ENCODE measurements at regions of chr2 and their contacts with region 1.

Region 1: GRCh38 chr2:230658877-230659652 is 53.6 kb upstream of the CAB39 start:
- DNase-seq: peak; percentile 91
- ATAC-seq: peak; percentile 61
- H3K4me3 ChIP-seq: peak overlapping the region; percentile 62
- H3K27ac ChIP-seq: peak overlapping the region; percentile 91
- H3K4me1 ChIP-seq: peaks cover 67% of the 10 kb centered on the region
- H3K27me3 ChIP-seq: no peaks in the 10 kb centered on the region
- CTCF ChIP-seq: no peak
- EP300 ChIP-seq: peak; percentile 62 to 76
- POLR2A ChIP-seq: no peak; the same call in 1 of the 2 replicates
- RAD21 ChIP-seq: peak; percentile 31; the same call in 1 of the 2 replicates

Region 2: DNA sequence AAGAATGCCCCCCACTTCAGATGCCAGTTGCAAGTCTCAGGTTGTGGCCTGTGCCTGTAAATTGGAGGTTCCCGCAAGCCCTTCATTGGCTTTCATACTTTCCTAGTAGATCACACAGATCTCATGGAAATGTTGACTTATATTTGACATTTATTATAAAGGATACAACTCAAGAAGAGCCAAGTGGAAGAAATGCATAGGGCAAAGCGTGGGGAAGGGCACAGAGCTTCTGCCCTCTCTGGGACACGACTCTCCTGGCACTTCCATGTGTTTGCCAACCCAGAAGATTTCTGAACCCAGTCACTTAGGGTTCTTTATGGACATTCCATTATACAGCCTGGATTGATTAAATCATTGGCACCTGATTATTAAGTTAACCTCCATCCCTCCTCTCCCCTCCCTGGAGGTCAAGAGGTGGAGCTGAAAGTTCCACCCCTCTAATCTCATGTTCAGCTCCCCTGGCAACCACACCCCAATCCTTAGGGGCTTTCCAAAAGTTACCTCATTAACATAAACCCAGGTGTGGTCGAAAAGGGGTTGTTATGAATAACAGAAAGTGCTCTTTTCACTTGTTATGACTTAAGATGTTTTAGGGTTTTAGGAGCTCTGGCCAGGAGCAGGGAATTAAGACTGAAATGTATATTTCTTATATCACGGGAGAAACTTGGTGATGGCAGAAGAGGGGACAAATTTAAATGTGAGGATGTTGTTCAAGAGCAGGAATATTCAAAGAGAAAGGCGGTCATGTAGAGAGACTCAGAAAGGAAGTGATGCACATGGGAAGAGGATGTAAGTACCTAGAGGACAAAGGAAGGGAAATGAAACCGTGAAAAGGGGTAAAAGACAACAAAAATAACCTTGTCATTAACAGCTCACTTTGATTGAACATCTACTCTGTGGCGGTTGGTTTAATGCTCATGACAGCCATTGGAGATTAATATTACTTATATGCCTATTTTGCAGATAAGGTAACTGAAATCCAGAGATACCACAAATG is 211.3 kb before region 1 on chr2:
- CTCF ChIA-PET with region 1: no interaction called
- POLR2A ChIA-PET with region 1: no interaction called
- RAD21 ChIA-PET with region 1: interaction called, 3 read pairs
- SMC1A ChIA-PET with region 1: interaction called, 3 read pairs
- in situ Hi-C with region 1: no loop called
- intact Hi-C with region 1: loop called (anchors 5 kb)
- DNase-seq: peak; percentile 84
- ATAC-seq: peak; percentile 87
- H3K4me3 ChIP-seq: 0 out of 2 replicates have a peak overlapping the region, but pooled peaks have one; percentile 13
- H3K27ac ChIP-seq: peak overlapping the region; percentile 89
- H3K4me1 ChIP-seq: peaks cover 53% of the 10 kb centered on the region
- H3K27me3 ChIP-seq: no peaks in the 10 kb centered on the region
- CTCF ChIP-seq: no peak
- EP300 ChIP-seq: peak; percentile 80 to 84; a peak in 3 of 4 replicates
- POLR2A ChIP-seq: no peak
- RAD21 ChIP-seq: no peak

Region 3: DNA sequence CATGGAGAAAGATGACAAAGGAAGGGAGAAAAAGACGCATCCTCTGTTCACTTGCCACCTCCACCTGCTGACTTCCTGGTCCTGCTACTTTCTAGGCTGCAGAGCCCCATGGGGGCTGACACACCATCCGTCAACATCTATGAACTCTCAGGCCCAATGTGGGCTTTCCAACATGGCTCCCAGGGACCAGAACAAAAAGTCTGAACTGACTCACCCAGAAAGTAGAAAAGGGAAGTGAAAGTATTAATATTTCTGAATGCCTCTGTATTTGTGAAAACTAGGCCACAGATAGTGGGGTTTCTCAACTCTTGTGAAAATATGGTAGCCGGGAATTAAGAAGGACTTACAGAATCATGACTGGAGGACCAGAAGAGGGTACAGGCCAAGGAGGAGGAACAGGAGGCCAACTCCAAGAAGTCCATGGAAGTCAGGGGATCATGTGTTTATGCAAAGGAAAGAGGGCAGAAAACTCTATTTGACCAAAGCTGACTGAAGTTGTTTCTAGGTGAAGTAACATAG is 69.5 kb before region 1 on chr2:
- CTCF ChIA-PET with region 1: no interaction called
- POLR2A ChIA-PET with region 1: interaction called, 11 read pairs
- RAD21 ChIA-PET with region 1: interaction called, 17 read pairs
- SMC1A ChIA-PET with region 1: interaction called, 4 read pairs
- in situ Hi-C with region 1: no loop called
- intact Hi-C with region 1: no loop called
- DNase-seq: peak; percentile 98
- ATAC-seq: peak; percentile 90
- H3K4me3 ChIP-seq: no peak overlapping the region
- H3K27ac ChIP-seq: peak overlapping the region; percentile 96
- H3K4me1 ChIP-seq: peaks cover 62% of the 10 kb centered on the region
- H3K27me3 ChIP-seq: no peaks in the 10 kb centered on the region
- CTCF ChIP-seq: 0 out of 6 replicates have a peak, but pooled peaks of 1 of the 3 experiments have one; percentile 3
- EP300 ChIP-seq: peak; percentile 91 to 98
- POLR2A ChIP-seq: peak; percentile 77
- RAD21 ChIP-seq: peak; percentile 38; the same call in 1 of the 2 replicates

Region 4: GRCh38 chr2:230636684-230637271 is 22.3 kb before region 1 on chr2:
- CTCF ChIA-PET with region 1: interaction called, 6 read pairs
- POLR2A ChIA-PET with region 1: interaction called, 27 read pairs
- RAD21 ChIA-PET with region 1: interaction called, 49 read pairs
- SMC1A ChIA-PET with region 1: interaction called, 75 read pairs
- in situ Hi-C with region 1: no loop called
- intact Hi-C with region 1: loop called (anchors 1 kb)
- DNase-seq: no peak
- ATAC-seq: peak; percentile 70
- H3K4me3 ChIP-seq: no peak overlapping the region
- H3K27ac ChIP-seq: peak overlapping the region; percentile 54
- H3K4me1 ChIP-seq: peaks cover 14% of the 10 kb centered on the region
- H3K27me3 ChIP-seq: no peaks in the 10 kb centered on the region
- CTCF ChIP-seq: no peak
- EP300 ChIP-seq: peak in 1 of 2 experiments; percentile 73; a peak in 2 of 4 replicates
- POLR2A ChIP-seq: no peak
- RAD21 ChIP-seq: no peak

Region 5: DNA sequence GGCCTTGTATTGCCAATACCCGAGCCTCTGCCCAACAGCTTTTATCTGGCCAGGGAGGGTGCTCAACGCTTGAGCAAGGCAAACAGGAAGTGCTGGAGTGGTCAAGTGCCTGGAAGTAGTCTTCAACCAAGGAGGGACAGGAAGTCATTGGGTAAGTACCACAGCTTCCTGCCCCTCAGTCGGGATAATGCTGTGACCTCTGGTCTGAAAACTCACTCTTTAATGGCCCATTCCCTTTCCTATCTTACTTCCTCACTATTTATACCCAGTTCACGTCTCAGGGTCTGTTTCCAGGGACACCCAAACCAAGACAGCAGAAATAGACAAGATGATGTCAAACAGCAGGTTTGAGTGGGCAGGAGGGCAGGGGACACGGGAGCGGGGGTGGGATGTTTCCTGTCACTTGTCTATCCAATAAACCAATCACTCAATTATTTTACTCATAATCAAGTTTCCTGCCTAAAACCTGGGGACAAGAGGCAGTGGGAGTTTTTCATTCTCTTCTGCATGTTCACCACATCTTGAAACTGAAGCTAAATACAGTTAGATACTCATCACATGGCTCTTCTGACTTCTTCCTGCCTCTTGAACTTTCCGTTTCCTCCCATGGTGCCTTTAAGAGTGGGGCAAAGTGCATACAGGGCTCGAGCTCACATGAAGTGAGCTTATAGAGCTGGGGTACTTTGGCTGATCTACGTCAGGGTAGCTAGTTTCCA is 15.3 kb before region 1 on chr2:
- CTCF ChIA-PET with region 1: interaction called, 13 read pairs
- POLR2A ChIA-PET with region 1: interaction called, 65 read pairs
- RAD21 ChIA-PET with region 1: interaction called, 126 read pairs
- SMC1A ChIA-PET with region 1: interaction called, 75 read pairs
- in situ Hi-C with region 1: no loop called
- intact Hi-C with region 1: no loop called
- DNase-seq: no peak
- ATAC-seq: peak; percentile 88
- H3K4me3 ChIP-seq: no peak overlapping the region
- H3K27ac ChIP-seq: peak overlapping the region; percentile 60
- H3K4me1 ChIP-seq: peaks cover 18% of the 10 kb centered on the region
- H3K27me3 ChIP-seq: no peaks in the 10 kb centered on the region
- CTCF ChIP-seq: no peak
- EP300 ChIP-seq: peak in 1 of 2 experiments; percentile 26; a peak in 1 of 4 replicates
- POLR2A ChIP-seq: no peak
- RAD21 ChIP-seq: no peak

Region 6: DNA sequence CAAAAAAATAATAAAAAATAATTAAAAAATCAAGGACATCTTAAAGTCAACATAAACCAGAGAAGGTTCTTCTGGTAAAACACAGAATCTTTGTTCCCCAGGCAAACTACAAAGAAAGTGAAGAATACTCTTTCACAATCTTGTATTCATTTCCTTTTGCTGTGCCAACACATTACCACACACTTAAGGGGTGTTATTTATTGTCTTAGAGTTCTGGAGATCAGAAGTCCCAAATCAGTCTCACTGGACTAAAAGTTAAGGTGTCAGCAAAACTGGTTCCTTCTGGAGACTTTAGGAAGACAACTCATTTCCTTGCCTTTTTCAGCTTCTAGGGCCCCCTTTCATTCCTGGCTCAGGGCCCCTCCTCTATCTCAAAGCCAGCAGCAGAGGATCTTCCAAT is 41.4 kb after region 1 on chr2:
- CTCF ChIA-PET with region 1: no interaction called
- POLR2A ChIA-PET with region 1: no interaction called
- RAD21 ChIA-PET with region 1: no interaction called
- SMC1A ChIA-PET with region 1: no interaction called
- in situ Hi-C with region 1: no loop called
- intact Hi-C with region 1: no loop called
- DNase-seq: no peak
- ATAC-seq: no peak
- H3K4me3 ChIP-seq: no peak overlapping the region
- H3K27ac ChIP-seq: no peak overlapping the region
- H3K4me1 ChIP-seq: no peaks in the 10 kb centered on the region
- H3K27me3 ChIP-seq: no peaks in the 10 kb centered on the region
- CTCF ChIP-seq: no peak
- EP300 ChIP-seq: no peak
- POLR2A ChIP-seq: no peak
- RAD21 ChIP-seq: no peak

Region 7: GRCh38 chr2:230721712-230722111 is 62.6 kb after region 1 on chr2:
- CTCF ChIA-PET with region 1: interaction called, 4 read pairs
- POLR2A ChIA-PET with region 1: interaction called, 3 read pairs
- RAD21 ChIA-PET with region 1: interaction called, 12 read pairs
- SMC1A ChIA-PET with region 1: interaction called, 5 read pairs
- in situ Hi-C with region 1: no loop called
- intact Hi-C with region 1: no loop called
- DNase-seq: no peak
- ATAC-seq: peak; percentile 55
- H3K4me3 ChIP-seq: peak overlapping the region; percentile 45; the same call in 1 of the 2 replicates
- H3K27ac ChIP-seq: peak overlapping the region; percentile 65
- H3K4me1 ChIP-seq: peaks cover 34% of the 10 kb centered on the region
- H3K27me3 ChIP-seq: no peaks in the 10 kb centered on the region
- CTCF ChIP-seq: no peak
- EP300 ChIP-seq: no peak
- POLR2A ChIP-seq: no peak
- RAD21 ChIP-seq: no peak

Region 8: DNA sequence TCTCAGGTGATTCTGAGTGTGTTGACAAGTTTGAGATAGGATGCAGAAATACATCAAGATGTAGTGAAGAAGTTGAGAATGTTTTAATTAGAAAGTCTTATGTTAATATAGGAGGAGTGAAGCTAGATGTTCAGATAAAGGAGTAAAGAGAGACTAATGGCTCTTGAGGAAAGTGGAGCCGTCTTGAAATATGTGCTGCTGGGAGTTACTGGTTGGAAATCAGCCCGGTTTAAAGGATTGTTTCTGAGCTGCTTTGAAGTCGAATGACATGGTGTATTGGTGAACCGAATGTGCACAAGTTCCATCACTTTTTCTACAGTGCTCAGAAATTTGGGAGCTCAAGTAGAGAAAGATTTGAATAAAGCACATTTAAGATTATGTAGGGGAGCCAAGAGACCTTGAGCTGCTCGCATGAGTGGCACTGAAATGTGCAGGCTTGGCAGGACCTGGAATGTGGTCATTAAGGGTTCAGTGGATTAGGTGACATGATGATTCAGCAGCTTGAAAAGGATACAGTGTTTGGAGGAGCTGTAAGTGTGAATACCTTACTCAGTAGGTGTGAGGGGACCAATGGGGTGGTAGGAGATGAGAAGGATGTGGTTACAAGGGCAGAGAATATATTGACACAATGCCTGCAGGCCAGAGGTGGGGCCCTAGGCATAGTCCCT is 122.2 kb after region 1 on chr2:
- CTCF ChIA-PET with region 1: no interaction called
- POLR2A ChIA-PET with region 1: interaction called, 3 read pairs
- RAD21 ChIA-PET with region 1: interaction called, 3 read pairs
- SMC1A ChIA-PET with region 1: interaction called, 7 read pairs
- in situ Hi-C with region 1: no loop called
- intact Hi-C with region 1: loop called (anchors 5 kb)
- DNase-seq: no peak
- ATAC-seq: peak; percentile 62
- H3K4me3 ChIP-seq: no peak overlapping the region
- H3K27ac ChIP-seq: no peak overlapping the region
- H3K4me1 ChIP-seq: peaks cover 18% of the 10 kb centered on the region
- H3K27me3 ChIP-seq: no peaks in the 10 kb centered on the region
- CTCF ChIP-seq: no peak
- EP300 ChIP-seq: no peak
- POLR2A ChIP-seq: no peak
- RAD21 ChIP-seq: no peak

Region 9: DNA sequence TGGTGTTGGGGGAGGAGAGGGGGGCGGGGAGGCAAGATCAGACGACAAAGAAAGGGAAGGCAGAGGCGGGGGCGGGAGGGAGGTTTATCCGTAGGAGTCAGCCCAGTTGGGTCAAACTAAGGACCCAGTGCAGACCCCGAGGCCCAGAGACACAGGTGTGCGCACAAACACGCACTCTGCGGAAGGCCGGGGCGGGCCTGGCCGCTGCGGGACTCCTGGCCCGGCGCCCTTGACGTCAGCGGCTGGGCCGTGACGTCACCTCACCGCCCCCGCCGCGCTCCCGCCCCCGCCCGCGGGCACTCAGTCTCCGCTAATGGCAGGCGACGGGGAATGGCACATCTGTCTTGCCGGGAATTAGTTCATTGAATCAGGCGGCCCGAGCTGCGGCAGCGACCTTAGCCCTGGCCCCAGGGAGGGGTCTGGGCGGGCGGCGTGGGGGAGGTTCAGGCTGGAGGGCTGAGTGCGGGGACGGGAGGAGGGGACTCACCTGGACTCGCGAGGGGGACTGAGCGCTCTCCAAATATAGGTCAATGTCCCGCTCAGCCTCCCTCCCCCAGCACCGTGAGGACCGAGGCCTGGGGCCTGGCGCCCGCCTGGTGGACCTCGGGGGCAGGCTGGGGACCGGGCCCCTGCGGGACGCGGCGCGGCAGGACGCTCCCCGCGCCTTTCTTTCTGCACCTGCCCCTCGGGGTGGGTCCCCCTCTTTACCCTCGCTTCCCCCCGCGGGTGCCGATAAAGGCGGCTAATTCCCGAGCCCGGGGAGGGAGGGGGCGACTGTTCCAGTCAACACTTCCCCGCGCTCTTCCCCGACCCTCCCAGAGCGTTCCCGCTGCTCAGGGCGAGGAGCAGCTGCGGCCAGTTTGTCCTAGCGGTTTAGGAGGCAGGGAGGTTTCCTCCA is 1844.1 kb after region 1 on chr2:
- CTCF ChIA-PET with region 1: no interaction called
- POLR2A ChIA-PET with region 1: no interaction called
- RAD21 ChIA-PET with region 1: no interaction called
- SMC1A ChIA-PET with region 1: no interaction called
- in situ Hi-C with region 1: no loop called
- intact Hi-C with region 1: no loop called
- DNase-seq: no peak
- ATAC-seq: no peak; the same call in 2 of the 3 replicates
- H3K4me3 ChIP-seq: no peak overlapping the region
- H3K27ac ChIP-seq: no peak overlapping the region
- H3K4me1 ChIP-seq: no peaks in the 10 kb centered on the region
- H3K27me3 ChIP-seq: peaks cover 5 to 12% of the 10 kb centered on the region in 2 experiments
- CTCF ChIP-seq: no peak
- EP300 ChIP-seq: no peak
- POLR2A ChIP-seq: no peak
- RAD21 ChIP-seq: no peak